WTC11 (cell line): ENCODE measurements at regions of chr9 and their contacts with region 1.

Region 1: GRCh38 chr9:85425153-85425611 is 316.6 kb downstream of the AGTPBP1 start:
- DNase-seq: peak; percentile 93
- ATAC-seq: peak; percentile 99
- H3K4me3 Mint-ChIP-seq: no peak overlapping the region
- H3K27ac Mint-ChIP-seq: no peak overlapping the region
- H3K4me1 Mint-ChIP-seq: peaks cover 24% of the 10 kb centered on the region
- H3K27me3 Mint-ChIP-seq: no peaks in the 10 kb centered on the region
- CTCF ChIP-seq: peak; percentile 91

Region 2: GRCh38 chr9:85332487-85332886 is 92.7 kb before region 1 on chr9:
- CTCF ChIA-PET with region 1: interaction called, 49 read pairs
- POLR2A ChIA-PET with region 1: no interaction called
- DNase-seq: peak; percentile 41
- ATAC-seq: peak; percentile 100
- H3K4me3 Mint-ChIP-seq: no peak overlapping the region
- H3K27ac Mint-ChIP-seq: no peak overlapping the region
- H3K4me1 Mint-ChIP-seq: no peaks in the 10 kb centered on the region
- H3K27me3 Mint-ChIP-seq: no peaks in the 10 kb centered on the region
- CTCF ChIP-seq: no peak; the same call in 1 of the 2 replicates

Region 3: GRCh38 chr9:85414390-85414789 is 10.8 kb before region 1 on chr9:
- CTCF ChIA-PET with region 1: interaction called, 18 read pairs
- POLR2A ChIA-PET with region 1: no interaction called
- DNase-seq: no peak
- ATAC-seq: no peak
- H3K4me3 Mint-ChIP-seq: no peak overlapping the region
- H3K27ac Mint-ChIP-seq: no peak overlapping the region
- H3K4me1 Mint-ChIP-seq: peaks cover 23% of the 10 kb centered on the region
- H3K27me3 Mint-ChIP-seq: no peaks in the 10 kb centered on the region
- CTCF ChIP-seq: no peak

Region 4: DNA sequence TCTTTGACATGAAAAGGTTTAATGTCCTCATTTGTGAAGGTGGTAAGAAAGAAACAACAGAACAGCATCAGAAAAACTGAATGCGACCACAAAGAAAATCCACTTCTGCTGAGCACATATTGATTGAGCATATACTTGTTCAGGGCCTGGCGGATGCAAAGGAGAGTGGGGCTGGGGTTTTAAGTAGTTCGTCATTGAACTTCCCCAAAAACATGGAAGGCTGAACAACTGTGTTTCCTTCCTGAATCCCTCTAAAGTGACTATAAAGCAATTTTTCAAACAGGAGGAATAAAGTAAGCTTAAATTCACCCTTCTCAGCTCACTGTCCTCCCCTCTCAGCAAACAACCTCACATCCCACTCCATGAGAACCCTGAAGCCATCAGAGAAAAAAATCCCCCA is 53.7 kb after region 1 on chr9:
- CTCF ChIA-PET with region 1: interaction called, 11 read pairs
- POLR2A ChIA-PET with region 1: no interaction called
- DNase-seq: no peak
- ATAC-seq: no peak
- H3K4me3 Mint-ChIP-seq: no peak overlapping the region
- H3K27ac Mint-ChIP-seq: no peak overlapping the region
- H3K4me1 Mint-ChIP-seq: peaks cover 23% of the 10 kb centered on the region
- H3K27me3 Mint-ChIP-seq: peaks cover 40% of the 10 kb centered on the region
- CTCF ChIP-seq: no peak

Region 5: GRCh38 chr9:85577353-85577952 is 152.3 kb after region 1 on chr9:
- CTCF ChIA-PET with region 1: no interaction called
- POLR2A ChIA-PET with region 1: no interaction called
- DNase-seq: no peak
- ATAC-seq: no peak
- H3K4me3 Mint-ChIP-seq: no peak overlapping the region
- H3K27ac Mint-ChIP-seq: peak overlapping the region; percentile 42; the same call in 1 of the 2 replicates
- H3K4me1 Mint-ChIP-seq: peaks cover 4% of the 10 kb centered on the region; the same call in 1 of the 2 replicates
- H3K27me3 Mint-ChIP-seq: no peaks in the 10 kb centered on the region
- CTCF ChIP-seq: no peak

Region 6: DNA sequence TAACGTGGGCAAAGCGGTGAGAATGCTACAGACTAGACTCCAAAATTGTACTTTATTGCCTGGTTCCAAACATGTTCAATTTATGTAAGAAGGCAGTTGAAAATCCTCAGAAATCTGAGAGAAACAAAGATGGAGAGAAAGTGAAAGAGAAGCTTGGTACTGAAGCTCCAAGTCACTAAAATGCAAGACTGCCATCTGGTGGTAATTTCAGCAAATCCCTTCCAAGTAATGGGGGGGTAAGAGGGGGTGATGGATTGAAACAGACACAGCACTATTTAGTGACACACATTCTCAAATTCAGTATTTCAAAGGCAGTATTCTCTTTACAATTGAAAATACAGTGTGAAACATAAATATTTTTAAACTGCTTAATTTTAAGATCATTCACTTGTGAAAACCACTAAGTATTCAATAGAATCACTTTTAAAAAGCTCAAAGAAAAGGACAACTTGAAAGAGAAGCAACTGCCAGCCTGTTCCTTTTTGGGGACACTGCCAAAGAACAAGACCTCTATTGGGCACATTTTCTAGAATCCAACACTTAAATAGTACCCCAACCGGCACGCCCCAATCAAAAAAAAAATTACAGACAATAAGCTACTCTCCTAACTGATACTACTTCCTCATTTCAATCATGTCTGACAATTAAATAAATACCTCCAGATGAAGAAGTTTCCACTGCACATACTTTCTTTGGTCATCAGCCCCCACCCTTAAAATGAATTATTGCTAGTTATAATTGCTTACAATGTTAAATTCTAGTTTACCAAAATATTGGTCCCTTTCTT is 185.1 kb after region 1 on chr9:
- CTCF ChIA-PET with region 1: interaction called, 19 read pairs
- POLR2A ChIA-PET with region 1: no interaction called
- DNase-seq: peak; percentile 12
- ATAC-seq: peak; percentile 82
- H3K4me3 Mint-ChIP-seq: no peak overlapping the region
- H3K27ac Mint-ChIP-seq: no peak overlapping the region
- H3K4me1 Mint-ChIP-seq: peaks cover 4% of the 10 kb centered on the region; the same call in 1 of the 2 replicates
- H3K27me3 Mint-ChIP-seq: no peaks in the 10 kb centered on the region
- CTCF ChIP-seq: no peak; the same call in 1 of the 2 replicates